ENCODE measurements at regions of chr11 and their contacts with region 1.

Region 1: DNA sequence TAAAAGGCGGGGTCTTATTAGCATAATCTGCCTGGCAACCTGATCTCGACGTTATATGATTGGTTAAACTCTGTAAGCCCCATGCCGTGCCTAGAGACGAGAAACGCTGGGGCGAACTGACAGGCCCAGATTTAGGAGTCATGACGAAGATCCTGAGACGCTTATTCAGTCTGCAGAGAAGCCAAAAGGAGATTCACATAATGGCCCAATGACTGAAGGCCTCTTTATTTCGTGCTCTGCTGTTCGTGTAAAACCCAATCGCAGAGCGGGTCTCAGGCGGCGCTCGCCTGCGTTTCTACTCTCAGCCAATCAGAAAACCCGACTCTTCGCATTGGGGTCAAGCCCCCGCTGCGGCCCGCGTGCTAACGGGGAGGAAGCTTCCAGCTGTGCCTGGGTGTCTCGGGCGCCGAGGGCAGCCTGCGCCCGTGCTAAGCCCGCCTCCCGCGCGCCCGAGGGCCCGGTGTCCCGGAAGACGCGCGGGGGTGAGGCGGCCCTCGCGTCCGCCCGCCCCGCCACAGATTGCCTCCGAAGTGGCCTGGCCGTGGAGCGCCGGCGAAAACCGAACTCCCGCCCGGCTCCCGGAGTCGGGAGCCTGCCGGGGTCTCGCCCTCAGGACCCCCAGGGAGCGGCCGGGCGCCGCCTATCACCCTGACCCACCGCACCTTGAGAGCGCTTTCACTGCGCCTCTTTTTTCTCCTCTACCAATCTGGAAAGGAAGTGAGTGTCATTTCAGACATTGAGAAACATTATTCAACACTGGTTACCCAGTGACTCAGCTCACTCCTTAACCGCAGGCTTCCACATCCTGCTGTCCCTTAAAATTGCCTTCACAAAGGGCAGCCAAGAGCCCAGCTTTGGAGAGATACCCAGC is 446 bp upstream of the PRDM10 start:
- DNase-seq: peak; percentile 95
- ATAC-seq: peak; percentile 82
- H3K4me3 ChIP-seq: peak overlapping the region; percentile 66 to 87 (median 80)
- H3K27ac ChIP-seq: peak overlapping the region; percentile 99
- H3K4me1 ChIP-seq: peaks cover 44% of the 10 kb centered on the region
- H3K27me3 ChIP-seq: no peaks in the 10 kb centered on the region; a peak in 1 of 5 replicates
- CTCF ChIP-seq: no peak
- EP300 ChIP-seq: no peak
- POLR2A ChIP-seq: peak; percentile 66 to 85
- RAD21 ChIP-seq: peak; percentile 60

Region 2: GRCh38 chr11:129620237-129621104 is 382.6 kb before region 1 on chr11:
- CTCF ChIA-PET with region 1: no interaction called
- POLR2A ChIA-PET with region 1: no interaction called
- in situ Hi-C with region 1: no loop called
- intact Hi-C with region 1: no loop called
- DNase-seq: no peak
- ATAC-seq: no peak
- H3K4me3 ChIP-seq: no peak overlapping the region
- H3K27ac ChIP-seq: no peak overlapping the region
- H3K4me1 ChIP-seq: no peaks in the 10 kb centered on the region
- H3K27me3 ChIP-seq: peaks cover 1 to 13% of the 10 kb centered on the region in 2 experiments
- CTCF ChIP-seq: no peak
- EP300 ChIP-seq: no peak
- POLR2A ChIP-seq: no peak
- RAD21 ChIP-seq: no peak

Region 3: GRCh38 chr11:129992161-129992944 is 10.7 kb before region 1 on chr11:
- CTCF ChIA-PET with region 1: no interaction called
- POLR2A ChIA-PET with region 1: interaction called, 59 read pairs
- in situ Hi-C with region 1: no loop called
- intact Hi-C with region 1: no loop called
- DNase-seq: peak; percentile 82
- ATAC-seq: peak; percentile 90
- H3K4me3 ChIP-seq: no peak overlapping the region
- H3K27ac ChIP-seq: peak overlapping the region; percentile 3
- H3K4me1 ChIP-seq: peaks cover 47% of the 10 kb centered on the region
- H3K27me3 ChIP-seq: no peaks in the 10 kb centered on the region
- CTCF ChIP-seq: peak; percentile 84
- EP300 ChIP-seq: no peak
- POLR2A ChIP-seq: no peak
- RAD21 ChIP-seq: peak; percentile 53

Region 4: DNA sequence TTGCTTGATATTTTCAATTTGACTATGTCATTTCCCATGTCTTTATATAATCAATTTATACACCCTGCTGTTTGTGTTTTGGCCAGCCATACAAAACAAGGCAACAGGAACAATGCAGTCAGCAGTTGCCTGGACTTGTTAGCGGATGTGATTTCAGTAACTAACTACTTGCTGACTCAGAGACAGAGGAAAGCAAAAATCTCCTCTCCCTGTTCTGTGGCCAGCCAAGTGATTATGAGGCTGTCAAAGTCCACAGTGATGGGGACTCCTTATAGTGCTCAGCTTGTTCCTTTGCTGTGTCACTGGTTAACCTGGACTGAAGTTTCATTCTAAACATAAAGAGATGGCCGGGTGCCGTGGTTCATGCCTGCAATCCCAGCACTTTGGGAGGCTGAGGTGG is 34.0 kb after region 1 on chr11:
- CTCF ChIA-PET with region 1: no interaction called
- POLR2A ChIA-PET with region 1: interaction called, 23 read pairs
- in situ Hi-C with region 1: no loop called
- intact Hi-C with region 1: loop called (anchors 5 kb)
- DNase-seq: peak; percentile 77
- ATAC-seq: peak; percentile 80
- H3K4me3 ChIP-seq: peak overlapping the region in 2 of 3 experiments; percentile 34 to 44; a peak in 3 of 6 replicates
- H3K27ac ChIP-seq: no peak overlapping the region
- H3K4me1 ChIP-seq: peaks cover 31% of the 10 kb centered on the region
- H3K27me3 ChIP-seq: no peaks in the 10 kb centered on the region
- CTCF ChIP-seq: no peak
- EP300 ChIP-seq: no peak
- POLR2A ChIP-seq: no peak
- RAD21 ChIP-seq: no peak

Region 5: DNA sequence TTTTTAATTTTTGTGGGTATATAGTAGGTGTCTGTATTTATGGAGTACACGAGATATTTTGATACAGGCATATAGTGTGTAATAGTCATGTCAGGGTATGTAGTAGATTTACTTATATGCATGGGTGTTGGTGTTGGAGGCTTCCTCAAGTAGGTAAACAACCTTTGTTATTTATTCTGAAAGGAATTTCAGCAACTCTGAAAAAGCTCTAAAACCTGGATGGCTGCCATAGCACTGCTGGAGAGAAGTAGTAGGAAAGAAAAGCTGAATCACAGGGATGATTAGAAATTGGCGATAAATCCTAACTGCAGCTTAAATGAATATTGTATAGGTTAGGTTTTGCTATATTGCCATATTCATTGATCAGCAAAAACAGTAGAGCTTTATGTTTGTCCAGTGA is 112.1 kb after region 1 on chr11:
- CTCF ChIA-PET with region 1: no interaction called
- POLR2A ChIA-PET with region 1: interaction called, 12 read pairs
- in situ Hi-C with region 1: no loop called
- intact Hi-C with region 1: no loop called
- DNase-seq: no peak
- ATAC-seq: no peak
- H3K4me3 ChIP-seq: no peak overlapping the region
- H3K27ac ChIP-seq: no peak overlapping the region
- H3K4me1 ChIP-seq: peaks cover 46% of the 10 kb centered on the region
- H3K27me3 ChIP-seq: no peaks in the 10 kb centered on the region
- CTCF ChIP-seq: no peak
- EP300 ChIP-seq: no peak
- POLR2A ChIP-seq: no peak
- RAD21 ChIP-seq: no peak

Region 6: GRCh38 chr11:130145975-130146776 is 143.1 kb after region 1 on chr11:
- CTCF ChIA-PET with region 1: no interaction called
- POLR2A ChIA-PET with region 1: interaction called, 50 read pairs
- in situ Hi-C with region 1: no loop called
- intact Hi-C with region 1: no loop called
- DNase-seq: peak; percentile 65
- ATAC-seq: peak; percentile 66
- H3K4me3 ChIP-seq: no peak overlapping the region; a peak in 1 of 6 replicates
- H3K27ac ChIP-seq: peak overlapping the region; percentile 87
- H3K4me1 ChIP-seq: peaks cover 88% of the 10 kb centered on the region
- H3K27me3 ChIP-seq: no peaks in the 10 kb centered on the region
- CTCF ChIP-seq: peak; percentile 70
- EP300 ChIP-seq: peak in 1 of 2 experiments; percentile 42; a peak in 1 of 4 replicates
- POLR2A ChIP-seq: no peak
- RAD21 ChIP-seq: peak; percentile 63

Measured in HepG2 (cell line).